ENCODE measurements at regions of chr2 and their contacts with region 1.

Region 1: GRCh38 chr2:143162123-143162837 is 33.1 kb downstream of the ARHGAP15 start:
- DNase-seq: peak; percentile 21
- H3K4me3 ChIP-seq: no peak overlapping the region
- H3K27ac ChIP-seq: no peak overlapping the region
- H3K4me1 ChIP-seq: no peaks in the 10 kb centered on the region; a peak in 2 of 4 replicates
- H3K27me3 ChIP-seq: no peaks in the 10 kb centered on the region
- CTCF ChIP-seq: peak; percentile 58
- EP300 ChIP-seq: no peak
- RAD21 ChIP-seq: peak; percentile 93

Region 2: GRCh38 chr2:143110758-143111428 is 51.4 kb before region 1 on chr2:
- CTCF ChIA-PET with region 1: interaction called, 27 read pairs
- POLR2A ChIA-PET with region 1: no interaction called
- DNase-seq: peak; percentile 38
- H3K4me3 ChIP-seq: no peak overlapping the region; a peak in 1 of 4 replicates
- H3K27ac ChIP-seq: no peak overlapping the region
- H3K4me1 ChIP-seq: no peaks in the 10 kb centered on the region
- H3K27me3 ChIP-seq: no peaks in the 10 kb centered on the region
- CTCF ChIP-seq: peak; percentile 83
- EP300 ChIP-seq: no peak
- RAD21 ChIP-seq: peak; percentile 75

Region 3: DNA sequence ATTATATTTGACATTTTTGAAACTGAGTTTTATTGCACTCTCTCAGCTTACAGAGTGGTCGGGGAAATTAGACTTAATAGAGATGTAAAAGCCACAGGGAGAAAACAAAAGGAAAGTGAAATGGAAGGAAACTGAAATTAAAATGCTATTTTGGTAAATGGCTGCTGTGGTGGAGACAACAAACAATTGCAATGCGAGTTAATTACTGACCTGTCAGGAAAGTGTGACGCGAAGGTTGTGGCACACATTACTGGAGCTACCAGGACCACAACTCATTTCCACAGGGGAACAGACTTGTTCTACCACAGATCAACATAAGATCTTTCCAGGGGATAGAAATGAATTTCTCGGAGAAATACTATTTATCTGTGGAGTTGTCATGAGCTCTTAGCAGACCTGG is 13.5 kb before region 1 on chr2:
- CTCF ChIA-PET with region 1: interaction called, 10 read pairs
- POLR2A ChIA-PET with region 1: no interaction called
- DNase-seq: no peak
- H3K4me3 ChIP-seq: no peak overlapping the region
- H3K27ac ChIP-seq: no peak overlapping the region
- H3K4me1 ChIP-seq: no peaks in the 10 kb centered on the region; a peak in 1 of 4 replicates
- H3K27me3 ChIP-seq: no peaks in the 10 kb centered on the region
- CTCF ChIP-seq: no peak
- EP300 ChIP-seq: no peak
- RAD21 ChIP-seq: no peak

Region 4: DNA sequence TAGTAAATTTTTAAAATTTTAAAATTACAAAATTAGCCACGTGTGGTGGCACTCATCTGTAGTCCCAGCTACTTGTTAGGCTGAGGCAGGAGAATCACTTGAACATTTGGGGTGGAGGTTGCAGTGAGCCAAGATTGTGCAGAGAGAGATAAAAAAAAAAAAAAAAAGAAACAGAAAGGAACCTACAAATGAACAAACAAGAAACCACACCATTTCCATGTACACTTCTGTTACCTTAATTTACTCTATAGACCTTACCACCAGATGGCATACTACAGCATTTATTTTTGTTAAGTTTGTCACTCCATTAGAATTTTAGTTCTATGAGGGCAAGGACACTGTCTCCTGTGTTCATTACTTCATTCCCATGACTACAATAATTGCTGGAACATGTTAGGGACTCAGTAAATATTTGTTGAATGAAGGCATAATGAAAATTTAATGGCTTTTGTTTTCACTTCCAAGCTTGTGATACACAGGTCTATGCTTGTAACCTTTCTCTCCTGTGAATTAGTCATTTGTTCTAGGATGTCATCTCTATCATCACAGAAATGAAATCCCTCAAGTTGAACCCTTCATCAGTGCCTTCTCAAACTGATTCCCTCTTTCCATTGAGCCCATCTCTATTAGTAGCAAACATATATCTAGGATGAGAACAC is 43.0 kb after region 1 on chr2:
- CTCF ChIA-PET with region 1: interaction called, 23 read pairs
- POLR2A ChIA-PET with region 1: no interaction called
- DNase-seq: no peak
- H3K4me3 ChIP-seq: no peak overlapping the region
- H3K27ac ChIP-seq: no peak overlapping the region
- H3K4me1 ChIP-seq: peaks cover 0 to 5% of the 10 kb centered on the region in 2 experiments; a peak in 2 of 4 replicates
- H3K27me3 ChIP-seq: no peaks in the 10 kb centered on the region
- CTCF ChIP-seq: peak; percentile 53
- EP300 ChIP-seq: no peak
- RAD21 ChIP-seq: peak; percentile 18; the same call in 1 of the 2 replicates

Region 5: DNA sequence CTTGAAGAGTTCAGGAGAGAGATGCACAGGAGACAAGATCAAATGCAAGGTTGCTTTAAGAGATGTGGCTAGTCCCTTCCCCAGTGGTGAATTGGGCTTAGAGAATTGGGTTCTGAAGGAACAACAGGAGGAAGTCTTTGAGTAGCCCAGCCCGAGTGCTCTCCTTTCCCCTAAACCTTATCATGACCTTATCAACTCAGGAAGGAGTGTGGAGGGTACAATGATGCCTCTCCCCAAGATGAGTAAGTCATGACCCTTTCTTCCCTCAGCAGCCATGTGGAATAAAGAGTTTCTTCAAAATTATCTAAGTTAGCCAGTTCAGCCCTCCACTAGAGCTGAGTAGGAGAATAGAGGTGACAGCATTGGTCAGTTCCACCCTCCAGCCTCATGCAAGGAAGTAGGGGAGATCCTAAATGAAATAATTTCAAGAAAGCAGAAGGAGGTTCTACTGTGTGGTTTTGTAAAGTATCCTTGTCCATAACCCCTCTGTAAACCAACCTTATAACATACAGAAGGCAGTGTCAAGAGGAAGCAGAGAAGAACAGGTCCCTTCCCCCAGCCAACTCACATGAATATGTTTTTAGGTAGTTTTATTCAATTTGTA is 55.3 kb after region 1 on chr2:
- CTCF ChIA-PET with region 1: interaction called, 66 read pairs
- POLR2A ChIA-PET with region 1: no interaction called
- DNase-seq: no peak
- H3K4me3 ChIP-seq: no peak overlapping the region
- H3K27ac ChIP-seq: no peak overlapping the region
- H3K4me1 ChIP-seq: no peaks in the 10 kb centered on the region; a peak in 1 of 4 replicates
- H3K27me3 ChIP-seq: no peaks in the 10 kb centered on the region
- CTCF ChIP-seq: no peak
- EP300 ChIP-seq: no peak
- RAD21 ChIP-seq: no peak

Region 6: DNA sequence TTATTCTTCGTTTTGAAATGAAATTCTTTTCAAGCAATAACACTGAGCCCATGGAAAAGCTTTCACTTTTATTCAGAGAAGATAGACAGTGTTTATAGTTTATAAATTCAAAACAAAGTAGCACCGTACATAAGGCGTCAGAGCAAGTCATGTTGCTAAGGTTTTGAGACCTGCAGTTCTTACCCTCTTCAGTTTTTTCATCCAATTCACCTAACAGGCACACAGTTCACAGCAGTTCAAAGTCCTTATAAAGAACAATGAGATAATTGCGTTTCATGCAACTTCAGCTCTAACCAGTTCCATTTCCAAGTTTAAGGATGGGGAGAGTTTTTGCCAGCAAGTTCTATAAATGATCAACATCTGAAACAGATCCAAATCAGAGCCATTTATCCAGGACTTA is 63.7 kb after region 1 on chr2:
- CTCF ChIA-PET with region 1: interaction called, 66 read pairs
- POLR2A ChIA-PET with region 1: no interaction called
- DNase-seq: no peak
- H3K4me3 ChIP-seq: no peak overlapping the region
- H3K27ac ChIP-seq: no peak overlapping the region
- H3K4me1 ChIP-seq: peaks cover 0 to 3% of the 10 kb centered on the region in 2 experiments; a peak in 2 of 4 replicates
- H3K27me3 ChIP-seq: no peaks in the 10 kb centered on the region
- CTCF ChIP-seq: no peak
- EP300 ChIP-seq: no peak
- RAD21 ChIP-seq: no peak

Measured in SK-N-SH (cell line).